Heart left ventricle (tissue), 16 donors: ENCODE measurements at regions of chr7 and their contacts with region 1.

Region 1: DNA sequence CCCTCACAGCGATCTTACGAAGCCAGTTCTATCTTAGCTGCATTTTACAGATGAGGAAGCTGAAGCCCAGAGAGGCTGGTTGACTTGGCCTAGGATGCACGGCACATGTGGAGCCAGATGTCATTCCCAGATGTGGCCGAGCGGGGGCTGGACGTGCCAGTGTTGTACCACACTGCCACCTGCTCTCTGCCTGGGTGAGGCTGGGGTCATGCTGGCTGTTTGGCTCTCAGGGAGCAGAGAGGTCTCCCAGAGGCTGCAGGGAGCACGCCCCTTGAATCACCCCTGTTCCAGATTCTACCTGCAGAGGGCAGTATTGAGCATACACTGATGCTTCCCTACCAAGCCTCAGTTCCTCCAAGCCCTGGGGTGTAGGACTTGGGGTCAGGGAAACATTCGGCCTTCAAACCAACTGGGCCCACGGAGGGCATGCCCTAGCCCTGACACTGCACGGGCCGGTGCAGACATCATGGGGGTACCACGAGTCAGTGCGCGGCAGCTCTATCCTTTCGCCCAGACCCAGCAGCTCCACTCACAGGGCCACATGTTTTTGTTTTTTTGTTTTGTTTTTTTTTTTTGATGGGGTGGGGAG is 3.8 kb upstream of the GTF2IRD1 start:
- DNase-seq: peak in 4 of 5 donors; percentile 43 to 49 (median 48)
- ATAC-seq: peak in 3 of 4 donors; percentile 15 to 44 (median 39)
- H3K4me3 ChIP-seq: no peak overlapping the region
- H3K27ac ChIP-seq: no peak overlapping the region
- H3K4me1 ChIP-seq: peaks cover 0 to 24% (median 7%) of the 10 kb centered on the region in 12 donors
- H3K27me3 ChIP-seq: peaks cover 0 to 3% (median 0%) of the 10 kb centered on the region in 9 donors
- CTCF ChIP-seq: peak; percentile 68 to 88 (median 82)
- POLR2A ChIP-seq: no peak

Region 2: DNA sequence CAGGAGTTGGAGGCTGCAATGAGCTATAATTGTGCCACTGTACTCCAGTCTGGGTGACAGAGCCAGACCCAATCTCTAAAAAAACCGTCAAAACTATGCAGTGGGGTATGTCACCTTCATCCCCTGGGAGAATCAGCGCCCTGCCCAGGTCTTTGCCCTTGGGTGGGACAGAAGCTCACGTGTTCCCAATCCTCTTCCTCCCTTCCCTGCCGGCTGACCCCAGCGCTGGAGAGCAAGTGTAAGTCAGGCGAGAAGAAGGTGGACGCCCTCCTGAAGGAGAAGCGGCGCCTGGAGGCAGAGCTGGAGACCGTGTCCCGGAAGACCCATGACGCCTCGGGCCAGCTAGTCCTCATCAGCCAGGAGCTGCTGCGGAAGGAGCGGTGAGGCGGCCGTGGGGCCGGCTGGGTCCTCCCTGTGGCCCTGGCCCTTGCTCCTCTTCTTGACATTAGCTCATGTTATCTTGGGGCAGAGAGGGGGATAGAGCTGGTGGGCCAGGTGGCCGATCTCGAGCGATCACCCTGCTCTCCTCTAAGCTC is 61.0 kb before region 1 on chr7:
- intact Hi-C with region 1: no loop called
- DNase-seq: peak in 1 of 5 donors; percentile 53
- ATAC-seq: no peak
- H3K4me3 ChIP-seq: no peak overlapping the region
- H3K27ac ChIP-seq: no peak overlapping the region
- H3K4me1 ChIP-seq: peaks cover 0 to 9% (median 5%) of the 10 kb centered on the region in 12 donors
- H3K27me3 ChIP-seq: no peaks in the 10 kb centered on the region
- CTCF ChIP-seq: no peak
- POLR2A ChIP-seq: no peak

Region 3: GRCh38 chr7:74502181-74502891 is 52.4 kb after region 1 on chr7:
- intact Hi-C with region 1: loop called in 3 of 10 experiments (anchors 5 to 10 kb)
- DNase-seq: peak; percentile 47 to 80 (median 62)
- ATAC-seq: peak; percentile 49 to 66 (median 55)
- H3K4me3 ChIP-seq: no peak overlapping the region
- H3K27ac ChIP-seq: peak overlapping the region in 11 of 12 donors; percentile 16 to 90 (median 71)
- H3K4me1 ChIP-seq: peaks cover 0 to 24% (median 7%) of the 10 kb centered on the region in 12 donors
- H3K27me3 ChIP-seq: no peaks in the 10 kb centered on the region
- CTCF ChIP-seq: no peak
- POLR2A ChIP-seq: no peak

Region 4: DNA sequence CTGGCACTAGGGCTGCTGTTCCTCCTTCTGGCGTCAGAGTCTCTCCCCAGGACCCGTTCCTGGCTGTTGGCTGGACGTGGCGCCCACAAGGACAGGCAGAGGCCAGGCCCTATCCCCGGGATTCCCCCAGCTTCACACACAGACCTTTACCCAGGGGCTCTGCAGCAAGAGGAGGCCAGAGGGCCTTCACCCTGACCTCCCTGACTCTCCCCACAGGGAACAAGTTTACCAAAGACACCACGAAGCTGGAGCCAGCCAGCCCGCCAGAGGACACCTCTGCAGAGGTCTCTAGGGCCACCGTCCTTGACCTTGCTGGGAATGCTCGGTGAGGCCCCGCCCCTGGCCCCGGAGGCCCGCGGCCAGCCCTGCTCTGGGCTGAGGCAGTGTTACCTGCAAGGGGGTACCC is 86.1 kb after region 1 on chr7:
- intact Hi-C with region 1: loop called in 3 of 10 experiments (anchors 5 to 10 kb)
- DNase-seq: peak in 2 of 5 donors; percentile 39 to 48
- ATAC-seq: peak; percentile 10 to 38 (median 28)
- H3K4me3 ChIP-seq: no peak overlapping the region
- H3K27ac ChIP-seq: peak overlapping the region in 11 of 12 donors; percentile 38 to 90 (median 68)
- H3K4me1 ChIP-seq: peaks cover 0 to 19% (median 6%) of the 10 kb centered on the region in 12 donors
- H3K27me3 ChIP-seq: no peaks in the 10 kb centered on the region
- CTCF ChIP-seq: no peak
- POLR2A ChIP-seq: no peak

Region 5: GRCh38 chr7:74554178-74554577 is 104.3 kb after region 1 on chr7:
- intact Hi-C with region 1: loop called in 2 of 10 experiments (anchors 5 to 10 kb)
- DNase-seq: no peak
- ATAC-seq: peak in 1 of 4 donors; percentile 2
- H3K4me3 ChIP-seq: no peak overlapping the region
- H3K27ac ChIP-seq: peak overlapping the region in 11 of 12 donors; percentile 16 to 88 (median 58)
- H3K4me1 ChIP-seq: peaks cover 0 to 11% (median 3%) of the 10 kb centered on the region in 12 donors
- H3K27me3 ChIP-seq: no peaks in the 10 kb centered on the region
- CTCF ChIP-seq: no peak
- POLR2A ChIP-seq: no peak

Region 6: GRCh38 chr7:74656837-74657691 is 207.2 kb after region 1 on chr7:
- intact Hi-C with region 1: loop called in 4 of 10 experiments (anchors 10 kb)
- DNase-seq: peak; percentile 99 to 100 (median 99)
- ATAC-seq: peak; percentile 92 to 96 (median 93)
- H3K4me3 ChIP-seq: peak overlapping the region; percentile 72 to 100 (median 99)
- H3K27ac ChIP-seq: peak overlapping the region; percentile 97 to 100 (median 100)
- H3K4me1 ChIP-seq: peaks cover 0 to 47% (median 38%) of the 10 kb centered on the region in 12 donors
- H3K27me3 ChIP-seq: no peaks in the 10 kb centered on the region
- CTCF ChIP-seq: peak in 10 of 12 donors; percentile 24 to 60 (median 34)
- POLR2A ChIP-seq: peak in 1 of 2 donors; percentile 59